ENCODE measurements at regions of chr15 and their contacts with region 1.

Region 1: GRCh38 chr15:82540055-82540983 is at the start of gene RPS17:
- DNase-seq: peak; percentile 96 to 99 (median 99)
- H3K4me3 ChIP-seq: peak within 1 kb of the TSS; percentile 73 to 91
- H3K4me3 Mint-ChIP-seq: peak within 1 kb of the TSS; percentile 95 to 99 (median 97)
- H3K27ac ChIP-seq: peak within 1 kb of the TSS; percentile 83
- H3K27ac Mint-ChIP-seq: peak within 1 kb of the TSS; percentile 94 to 98 (median 97)
- H3K4me1 ChIP-seq: peaks cover 26% of the 10 kb centered on the region
- H3K4me1 Mint-ChIP-seq: peaks cover 12 to 39% (median 25%) of the 10 kb centered on the region in 4 donors
- H3K27me3 ChIP-seq: no peaks in the 10 kb centered on the region
- H3K27me3 Mint-ChIP-seq: peaks cover 0 to 2% of the 10 kb centered on the region in 2 donors
- total RNA-seq, gene RPS17: 2,038 to 2,106 TPM

Region 2: DNA sequence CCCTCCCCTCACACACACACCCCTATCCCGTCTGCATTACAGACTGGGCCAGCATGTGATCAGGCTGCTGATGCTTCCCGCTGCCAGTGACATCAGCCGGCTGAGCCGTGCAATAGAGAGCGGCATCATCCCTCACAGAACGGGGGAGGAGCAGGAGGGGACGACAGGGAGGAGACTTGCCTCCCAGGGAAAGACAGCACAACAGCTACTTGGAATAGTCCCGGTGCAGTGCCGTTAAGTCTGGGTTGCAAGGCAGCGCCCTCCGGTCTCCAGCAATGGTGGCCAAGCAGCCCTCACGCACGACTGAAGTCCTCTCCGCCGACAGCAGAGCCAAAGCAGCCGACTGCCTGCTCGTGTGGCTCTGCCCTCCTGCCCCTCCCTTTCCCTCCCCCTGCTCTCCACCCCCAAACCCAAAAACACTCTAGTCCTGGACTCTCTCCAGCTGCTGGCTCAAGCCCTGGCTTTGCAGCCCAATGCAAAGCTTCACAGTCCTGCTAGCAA is 31.5 kb after region 1 on chr15:
- CTCF ChIA-PET with region 1: no interaction called
- POLR2A ChIA-PET with region 1: no interaction called
- intact Hi-C with region 1: no loop called
- DNase-seq: no peak
- H3K4me3 ChIP-seq: no peak overlapping the region
- H3K4me3 Mint-ChIP-seq: peak overlapping the region in 4 of 8 donors; percentile 5 to 59 (median 17)
- H3K27ac ChIP-seq: no peak overlapping the region
- H3K27ac Mint-ChIP-seq: no peak overlapping the region
- H3K4me1 ChIP-seq: no peaks in the 10 kb centered on the region
- H3K4me1 Mint-ChIP-seq: peaks cover 0 to 1% (median 0%) of the 10 kb centered on the region in 4 donors
- H3K27me3 ChIP-seq: peaks cover 9% of the 10 kb centered on the region
- H3K27me3 Mint-ChIP-seq: peaks cover 18 to 25% of the 10 kb centered on the region in 2 donors

Region 3: GRCh38 chr15:82680200-82681102 is 140.1 kb after region 1 on chr15:
- CTCF ChIA-PET with region 1: interaction called, 3 read pairs
- POLR2A ChIA-PET with region 1: interaction called, 14 read pairs
- intact Hi-C with region 1: loop called (anchors 1 kb)
- DNase-seq: peak; percentile 80 to 85 (median 82)
- H3K4me3 ChIP-seq: peak overlapping the region; percentile 70 to 92
- H3K4me3 Mint-ChIP-seq: peak overlapping the region; percentile 89 to 96 (median 91)
- H3K27ac ChIP-seq: peak overlapping the region; percentile 54
- H3K27ac Mint-ChIP-seq: peak overlapping the region; percentile 81 to 96 (median 92)
- H3K4me1 ChIP-seq: peaks cover 14% of the 10 kb centered on the region
- H3K4me1 Mint-ChIP-seq: peaks cover 7 to 16% (median 12%) of the 10 kb centered on the region in 4 donors
- H3K27me3 ChIP-seq: no peaks in the 10 kb centered on the region
- H3K27me3 Mint-ChIP-seq: peaks cover 3 to 6% of the 10 kb centered on the region in 2 donors

Region 4: GRCh38 chr15:82809404-82810060 is 269.2 kb after region 1 on chr15 and contains the start of gene WHAMM:
- CTCF ChIA-PET with region 1: interaction called, 5 read pairs
- POLR2A ChIA-PET with region 1: interaction called, 31 read pairs
- intact Hi-C with region 1: loop called (anchors 1 kb)
- DNase-seq: peak; percentile 94 to 98 (median 96)
- H3K4me3 ChIP-seq: peak within 1 kb of the TSS; percentile 89 to 94
- H3K4me3 Mint-ChIP-seq: peak within 1 kb of the TSS; percentile 88 to 100 (median 96)
- H3K27ac ChIP-seq: peak within 1 kb of the TSS; percentile 99
- H3K27ac Mint-ChIP-seq: peak within 1 kb of the TSS; percentile 95 to 100 (median 97)
- H3K4me1 ChIP-seq: peaks cover 35% of the 10 kb centered on the region
- H3K4me1 Mint-ChIP-seq: peaks cover 15 to 40% (median 28%) of the 10 kb centered on the region in 4 donors
- H3K27me3 ChIP-seq: no peaks in the 10 kb centered on the region
- H3K27me3 Mint-ChIP-seq: no peaks in the 10 kb centered on the region
- total RNA-seq, gene WHAMM: 31.6 to 33.5 TPM

Region 5: DNA sequence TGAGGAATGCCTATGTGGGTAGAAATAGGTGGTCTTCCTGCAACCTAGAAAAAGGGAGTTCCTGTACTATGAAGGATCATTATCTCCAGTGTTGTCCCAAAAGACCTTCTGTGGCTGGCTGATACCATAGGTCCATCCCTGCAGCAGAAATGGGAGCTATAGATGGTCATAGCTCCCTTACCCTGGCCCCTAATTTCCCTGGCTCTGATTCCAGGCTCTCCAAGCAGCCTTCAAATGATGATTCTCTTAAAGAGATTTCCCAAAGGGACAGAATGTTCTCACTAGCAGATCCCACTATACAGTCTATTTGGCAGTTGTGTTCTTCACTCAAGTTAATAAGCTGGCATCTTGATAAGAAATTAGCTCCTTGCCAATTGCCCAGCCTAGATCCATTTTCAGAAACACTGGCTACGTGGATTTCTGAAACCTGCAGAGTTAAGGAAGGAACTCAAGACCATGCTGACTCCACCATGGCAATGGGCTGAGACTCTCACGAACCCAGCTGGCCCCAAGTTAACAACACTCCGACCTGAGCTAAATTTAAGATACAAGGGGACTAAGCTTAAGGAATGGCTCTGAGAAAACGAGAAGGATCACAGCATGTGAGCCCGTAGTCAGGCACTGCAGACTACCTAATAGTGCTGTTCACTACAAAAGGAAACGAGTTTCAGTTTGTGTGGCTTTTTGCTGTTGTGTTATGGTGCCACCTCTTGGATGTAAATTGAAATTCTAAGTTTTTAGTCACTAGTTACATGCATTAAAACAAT is 459.8 kb after region 1 on chr15:
- CTCF ChIA-PET with region 1: interaction called, 18 read pairs
- POLR2A ChIA-PET with region 1: interaction called, 10 read pairs
- intact Hi-C with region 1: no loop called
- DNase-seq: peak in 4 of 5 donors; percentile 48 to 52 (median 50)
- H3K4me3 ChIP-seq: peak overlapping the region; percentile 1 to 48
- H3K4me3 Mint-ChIP-seq: peak overlapping the region in 7 of 8 donors; percentile 66 to 84 (median 79)
- H3K27ac ChIP-seq: peak overlapping the region; percentile 10
- H3K27ac Mint-ChIP-seq: peak overlapping the region; percentile 51 to 94 (median 89)
- H3K4me1 ChIP-seq: peaks cover 9% of the 10 kb centered on the region
- H3K4me1 Mint-ChIP-seq: peaks cover 6 to 12% (median 9%) of the 10 kb centered on the region in 4 donors
- H3K27me3 ChIP-seq: no peaks in the 10 kb centered on the region
- H3K27me3 Mint-ChIP-seq: no peaks in the 10 kb centered on the region

Region 6: DNA sequence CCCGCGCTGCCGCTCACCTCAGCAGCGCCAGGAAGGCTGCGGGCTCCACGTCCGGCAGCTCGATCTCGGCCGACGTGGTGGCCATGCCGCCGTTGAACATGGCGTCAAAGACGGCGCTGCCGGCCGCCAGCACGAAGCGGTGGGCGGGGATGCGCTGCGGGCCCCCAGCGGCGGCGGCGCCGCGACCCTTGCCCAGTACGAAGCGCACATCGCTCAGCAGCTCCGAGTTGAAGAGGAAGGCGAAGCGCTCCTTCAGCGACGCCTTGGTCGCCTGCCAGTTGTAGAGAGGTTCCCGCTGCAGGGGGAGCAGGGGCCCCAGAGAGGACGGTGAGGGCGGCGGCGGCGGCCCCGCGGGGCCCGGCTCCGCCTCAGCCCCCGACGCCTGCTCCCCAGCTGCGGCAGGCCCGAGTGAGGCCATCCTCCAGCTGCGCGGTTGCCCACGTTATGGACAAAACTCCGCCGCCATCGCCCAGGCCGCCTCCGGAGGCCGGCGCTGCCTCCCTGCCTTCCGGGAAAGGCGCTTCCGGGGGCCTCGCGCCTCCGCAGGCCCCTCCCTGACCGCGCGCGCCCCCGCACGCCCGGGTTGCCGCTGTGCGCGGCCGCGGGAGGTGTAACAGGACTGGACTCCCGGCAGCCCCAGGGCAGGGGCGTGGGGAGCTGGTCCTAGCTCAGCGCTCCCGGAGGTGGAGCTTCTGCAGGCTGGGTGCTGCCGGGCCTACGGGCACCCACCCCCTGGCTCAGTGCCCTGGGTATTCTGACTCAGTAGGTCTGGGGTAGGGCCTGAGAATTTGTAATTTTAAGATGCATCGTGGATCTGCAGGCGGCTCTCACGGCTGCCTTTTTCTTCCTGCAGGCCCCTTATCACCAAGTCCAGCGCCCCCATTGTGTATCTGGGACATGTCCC is 526.7 kb after region 1 on chr15 and contains the start of gene BTBD1:
- CTCF ChIA-PET with region 1: no interaction called
- POLR2A ChIA-PET with region 1: interaction called, 25 read pairs
- intact Hi-C with region 1: no loop called
- DNase-seq: peak; percentile 72 to 82 (median 78)
- H3K4me3 ChIP-seq: peak within 1 kb of the TSS; percentile 58 to 82
- H3K4me3 Mint-ChIP-seq: peak within 1 kb of the TSS; percentile 78 to 96 (median 86)
- H3K27ac ChIP-seq: peak within 1 kb of the TSS; percentile 78
- H3K27ac Mint-ChIP-seq: peak within 1 kb of the TSS; percentile 58 to 94 (median 84)
- H3K4me1 ChIP-seq: peaks cover 44% of the 10 kb centered on the region
- H3K4me1 Mint-ChIP-seq: peaks cover 6 to 16% (median 13%) of the 10 kb centered on the region in 4 donors
- H3K27me3 ChIP-seq: no peaks in the 10 kb centered on the region
- H3K27me3 Mint-ChIP-seq: no peaks in the 10 kb centered on the region
- total RNA-seq, gene BTBD1: 36.5 to 39.6 TPM